Naive thymus-derived CD8-positive, alpha-beta T cell (primary cell): ENCODE measurements at regions of chr11 and their contacts with region 1.

Region 1: GRCh38 chr11:65711785-65712632 is at the start of gene KAT5:
- DNase-seq: peak; percentile 93 to 100 (median 97)
- ATAC-seq: peak; percentile 86
- H3K4me3 Mint-ChIP-seq: peak within 1 kb of the TSS; percentile 92 to 100 (median 94)
- H3K27ac Mint-ChIP-seq: peak within 1 kb of the TSS; percentile 98 to 100 (median 99)
- H3K4me1 Mint-ChIP-seq: peaks cover 16 to 46% (median 35%) of the 10 kb centered on the region in 4 donors
- H3K27me3 Mint-ChIP-seq: no peaks in the 10 kb centered on the region
- polyA plus RNA-seq, gene KAT5: 38.0 to 57.3 (median 54.0) TPM

Region 2: GRCh38 chr11:65637794-65638317 is 74.2 kb before region 1 on chr11 and contains the start of gene SIPA1:
- POLR2A ChIA-PET with region 1: interaction called, 29 read pairs
- DNase-seq: peak; percentile 47 to 86 (median 75)
- ATAC-seq: peak; percentile 44 to 56
- H3K4me3 Mint-ChIP-seq: peak within 1 kb of the TSS; percentile 90 to 99 (median 94)
- H3K27ac Mint-ChIP-seq: peak within 1 kb of the TSS; percentile 90 to 100 (median 98)
- H3K4me1 Mint-ChIP-seq: peaks cover 16 to 54% (median 52%) of the 10 kb centered on the region in 4 donors
- H3K27me3 Mint-ChIP-seq: peaks cover 0 to 3% (median 0%) of the 10 kb centered on the region in 5 donors
- polyA plus RNA-seq, gene SIPA1: 118 to 238 (median 140) TPM

Region 3: DNA sequence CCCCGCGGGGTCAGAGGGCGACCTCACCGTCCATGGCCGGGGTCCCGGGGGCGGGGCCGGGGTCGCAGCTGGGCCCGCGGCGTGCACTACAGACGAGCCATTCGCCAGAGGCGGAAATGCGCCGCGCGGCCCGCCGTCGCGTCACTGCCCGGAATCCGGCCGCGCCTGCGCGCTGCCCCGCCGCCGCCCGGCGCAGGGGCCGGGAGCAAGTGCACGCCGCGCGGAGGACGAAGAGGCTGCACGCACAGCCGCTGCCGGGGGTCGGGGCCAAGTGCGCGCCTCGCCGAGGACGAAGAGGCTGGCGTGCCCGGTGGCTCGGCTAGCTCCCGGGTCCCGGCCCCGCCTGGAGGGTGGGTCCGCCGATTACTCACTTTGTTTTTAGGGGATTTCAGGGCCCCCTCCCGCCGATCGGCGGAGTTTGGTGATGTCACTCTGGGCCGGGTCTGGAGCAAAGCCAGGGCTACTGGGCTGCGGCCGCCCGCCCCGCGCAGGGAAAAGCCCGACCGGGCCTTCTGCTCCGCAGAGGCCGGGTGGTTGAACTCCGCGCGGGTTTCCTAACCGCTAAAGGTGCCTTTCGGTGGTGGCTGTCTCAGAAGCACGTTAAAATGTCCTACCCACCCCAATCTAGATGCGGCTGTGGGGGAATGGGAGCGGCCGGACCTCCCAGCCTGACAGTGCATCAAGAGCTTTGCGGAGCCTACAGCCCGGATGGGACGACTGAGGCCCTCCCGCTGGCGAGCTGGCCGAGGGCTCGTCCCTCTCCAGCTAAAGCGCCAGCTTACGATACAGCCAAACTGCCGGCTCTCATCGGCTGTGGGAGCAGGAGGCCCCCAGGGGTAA is 49.0 kb before region 1 on chr11 and contains the start of gene RELA:
- POLR2A ChIA-PET with region 1: interaction called, 12 read pairs
- DNase-seq: peak; percentile 85 to 95 (median 88)
- ATAC-seq: peak; percentile 80 to 84
- H3K4me3 Mint-ChIP-seq: peak within 1 kb of the TSS; percentile 86 to 93 (median 88)
- H3K27ac Mint-ChIP-seq: peak within 1 kb of the TSS; percentile 91 to 98 (median 95)
- H3K4me1 Mint-ChIP-seq: peaks cover 16 to 47% (median 36%) of the 10 kb centered on the region in 4 donors
- H3K27me3 Mint-ChIP-seq: no peaks in the 10 kb centered on the region
- polyA plus RNA-seq, gene RELA: 38.4 to 69.8 (median 56.6) TPM

Region 4: GRCh38 chr11:65779851-65780577 is 68.0 kb after region 1 on chr11:
- POLR2A ChIA-PET with region 1: interaction called, 16 read pairs
- DNase-seq: peak; percentile 65 to 81 (median 76)
- ATAC-seq: peak; percentile 62 to 74
- H3K4me3 Mint-ChIP-seq: peak overlapping the region; percentile 77 to 91 (median 83)
- H3K27ac Mint-ChIP-seq: peak overlapping the region in 9 of 10 donors; percentile 12 to 83 (median 68)
- H3K4me1 Mint-ChIP-seq: peaks cover 7 to 19% (median 17%) of the 10 kb centered on the region in 4 donors
- H3K27me3 Mint-ChIP-seq: peaks cover 0 to 7% (median 2%) of the 10 kb centered on the region in 5 donors

Region 5: GRCh38 chr11:65817835-65818742 is 106.1 kb after region 1 on chr11:
- POLR2A ChIA-PET with region 1: interaction called, 11 read pairs
- DNase-seq: peak; percentile 83 to 99 (median 91)
- ATAC-seq: peak; percentile 87 to 88
- H3K4me3 Mint-ChIP-seq: peak overlapping the region; percentile 70 to 86 (median 82)
- H3K27ac Mint-ChIP-seq: peak overlapping the region; percentile 48 to 91 (median 84)
- H3K4me1 Mint-ChIP-seq: peaks cover 6 to 16% (median 14%) of the 10 kb centered on the region in 4 donors
- H3K27me3 Mint-ChIP-seq: peaks cover 0 to 2% (median 0%) of the 10 kb centered on the region in 5 donors

Region 6: GRCh38 chr11:65873318-65874156 is 161.5 kb after region 1 on chr11:
- POLR2A ChIA-PET with region 1: interaction called, 12 read pairs
- DNase-seq: peak; percentile 90 to 100 (median 97)
- ATAC-seq: peak; percentile 83 to 92
- H3K4me3 Mint-ChIP-seq: peak overlapping the region; percentile 82 to 94 (median 90)
- H3K27ac Mint-ChIP-seq: peak overlapping the region; percentile 83 to 97 (median 94)
- H3K4me1 Mint-ChIP-seq: peaks cover 21 to 59% (median 45%) of the 10 kb centered on the region in 4 donors
- H3K27me3 Mint-ChIP-seq: no peaks in the 10 kb centered on the region

Region 7: GRCh38 chr11:65960796-65961231 is 248.8 kb after region 1 on chr11:
- POLR2A ChIA-PET with region 1: no interaction called
- DNase-seq: peak in 1 of 10 donors; percentile 55
- ATAC-seq: peak in 1 of 2 donors; percentile 1
- H3K4me3 Mint-ChIP-seq: peak overlapping the region; percentile 93 to 99 (median 98)
- H3K27ac Mint-ChIP-seq: peak overlapping the region; percentile 97 to 100 (median 98)
- H3K4me1 Mint-ChIP-seq: peaks cover 22 to 57% (median 53%) of the 10 kb centered on the region in 4 donors
- H3K27me3 Mint-ChIP-seq: no peaks in the 10 kb centered on the region